GM10248 (cell line): ENCODE measurements at regions of chr3 and their contacts with region 1.

Region 1: DNA sequence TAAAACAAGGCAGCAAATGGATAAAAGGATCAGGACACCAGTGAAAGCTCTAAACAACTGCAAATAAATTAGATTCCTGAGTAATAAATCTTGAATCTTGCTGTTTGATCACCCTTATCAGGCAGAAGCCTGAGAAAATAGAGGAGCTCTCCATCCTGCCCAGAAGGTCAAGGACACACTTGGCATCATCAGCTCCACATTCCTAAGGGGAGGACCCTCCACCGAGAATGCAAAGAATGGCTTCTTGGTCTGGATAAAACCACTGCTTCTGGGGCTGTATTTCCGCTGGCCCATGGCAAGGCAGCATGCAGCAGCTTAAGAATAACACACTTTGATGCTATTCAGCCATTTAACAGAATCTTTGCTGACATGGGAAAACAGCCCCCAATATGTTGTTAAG is 108.9 kb upstream of the TSC22D2 start:
- DNase-seq: no peak
- CTCF ChIP-seq: no peak

Region 2: GRCh38 chr3:150286390-150287147 is 12.6 kb before region 1 on chr3:
- CTCF ChIA-PET with region 1: interaction called, 11 read pairs
- POLR2A ChIA-PET with region 1: no interaction called
- DNase-seq: peak; percentile 36
- CTCF ChIP-seq: peak; percentile 56

Region 3: DNA sequence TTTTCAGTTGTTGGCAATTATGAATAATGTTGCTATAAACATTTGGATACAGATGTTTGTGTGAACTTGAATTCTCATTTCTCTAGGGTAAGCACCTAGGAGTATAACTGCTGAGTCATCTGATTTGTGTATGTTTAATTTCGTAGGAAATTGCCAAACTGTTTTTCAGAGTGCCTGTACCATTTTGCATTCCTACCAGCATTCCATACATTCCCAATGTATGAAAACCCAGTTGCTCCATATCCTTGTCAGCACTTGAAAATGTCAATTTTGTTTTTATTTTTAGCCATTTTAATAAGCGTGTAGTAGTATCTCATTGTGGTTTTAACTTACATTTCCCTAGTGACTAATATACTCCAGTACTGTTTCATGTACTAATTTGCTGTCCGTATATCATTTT is 10.4 kb after region 1 on chr3:
- CTCF ChIA-PET with region 1: interaction called, 12 read pairs
- POLR2A ChIA-PET with region 1: no interaction called
- DNase-seq: no peak
- CTCF ChIP-seq: no peak